Gastrocnemius medialis (tissue), 4 donors: ENCODE measurements at regions of chr20 and their contacts with region 1.

Region 1: DNA sequence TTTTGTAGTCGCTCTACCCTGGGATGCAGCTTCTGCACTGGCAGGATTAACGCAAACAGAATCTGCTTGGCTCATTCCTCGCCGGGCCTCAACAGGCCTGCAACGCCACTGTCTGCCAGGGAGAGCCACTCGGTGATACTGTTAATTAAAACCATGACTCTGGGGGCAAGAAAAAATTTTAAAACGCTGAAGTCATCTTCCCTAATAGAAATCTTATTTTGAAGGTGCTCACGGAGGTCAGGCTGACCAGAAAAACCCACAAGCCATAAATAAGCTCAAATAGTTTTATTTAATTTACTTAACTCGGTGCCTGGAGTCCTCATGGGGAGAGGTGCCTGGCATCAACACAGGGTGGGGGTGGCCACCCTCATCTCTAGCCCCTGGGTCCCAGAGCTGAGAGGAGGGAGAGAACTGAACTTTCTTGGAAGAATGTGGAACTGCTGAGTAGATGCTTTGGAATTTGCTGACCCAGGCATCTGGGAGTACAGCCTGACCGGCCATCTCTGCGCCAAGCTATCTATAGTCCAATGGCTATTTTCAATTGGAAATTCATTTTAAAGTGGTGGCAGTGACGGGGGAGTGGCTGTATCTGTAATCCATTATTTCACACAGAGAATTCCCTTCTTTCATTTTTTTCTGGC is 104.7 kb downstream of the CDH26 start:
- DNase-seq: peak in 1 of 2 donors; percentile 43
- ATAC-seq: peak; percentile 28 to 29
- H3K4me3 ChIP-seq: peak overlapping the region in 1 of 4 donors; percentile 11
- H3K27ac ChIP-seq: peak overlapping the region; percentile 58 to 93 (median 78)
- H3K4me1 ChIP-seq: peaks cover 52 to 58% of the 10 kb centered on the region in 2 donors
- H3K27me3 ChIP-seq: no peaks in the 10 kb centered on the region
- CTCF ChIP-seq: no peak
- POLR2A ChIP-seq: no peak

Region 2: DNA sequence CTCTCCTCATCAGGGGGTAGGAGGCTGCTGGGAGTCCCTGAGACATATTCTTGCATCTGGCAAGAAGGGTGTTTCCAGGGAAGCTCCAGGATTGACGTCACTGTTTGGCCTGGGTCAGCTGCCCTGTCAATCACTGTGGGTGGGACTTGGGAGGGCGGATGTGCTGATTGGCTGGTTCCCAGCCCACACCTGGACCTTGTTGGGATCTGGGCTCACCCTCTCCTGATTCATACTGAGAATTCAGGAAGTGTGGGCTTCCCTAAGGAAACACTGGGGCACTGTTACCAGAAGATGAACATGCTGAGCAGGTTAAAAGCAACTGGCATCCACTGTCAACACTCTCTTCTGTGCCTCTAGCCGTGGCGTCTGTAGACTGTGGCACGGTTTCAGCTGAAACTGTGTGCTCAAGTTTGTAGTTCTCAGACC is 68.2 kb before region 1 on chr20:
- in situ Hi-C with region 1: no loop called
- intact Hi-C with region 1: no loop called
- DNase-seq: no peak
- ATAC-seq: no peak
- H3K4me3 ChIP-seq: no peak overlapping the region
- H3K27ac ChIP-seq: no peak overlapping the region
- H3K4me1 ChIP-seq: peaks cover 0 to 3% of the 10 kb centered on the region in 2 donors
- H3K27me3 ChIP-seq: no peaks in the 10 kb centered on the region
- CTCF ChIP-seq: no peak
- POLR2A ChIP-seq: no peak

Region 3: DNA sequence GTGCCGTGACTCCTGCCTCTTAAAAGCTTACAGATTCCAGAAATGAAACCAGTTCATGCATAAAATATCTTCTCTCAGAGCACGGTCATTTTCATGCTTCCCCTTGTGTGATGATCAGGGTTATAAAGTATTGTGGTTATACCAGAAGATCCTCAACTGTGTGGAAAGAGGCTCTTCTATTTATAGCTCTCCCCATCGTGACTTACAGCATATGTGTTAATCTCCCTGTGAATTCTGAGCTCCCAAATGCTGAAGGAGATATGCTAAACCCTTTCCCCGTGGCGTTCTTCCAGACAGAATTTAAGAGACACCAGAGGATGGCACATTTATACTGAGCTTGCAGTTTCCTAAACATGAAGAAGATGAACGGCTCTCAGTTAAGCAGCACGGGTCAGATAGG is 54.1 kb after region 1 on chr20:
- in situ Hi-C with region 1: loop called in 1 of 4 experiments (anchors 10 kb)
- intact Hi-C with region 1: loop called (anchors 5 kb)
- DNase-seq: peak in 1 of 2 donors; percentile 36
- ATAC-seq: peak; percentile 93 to 97
- H3K4me3 ChIP-seq: no peak overlapping the region
- H3K27ac ChIP-seq: peak overlapping the region; percentile 36 to 60 (median 58)
- H3K4me1 ChIP-seq: peaks cover 13 to 26% of the 10 kb centered on the region in 2 donors
- H3K27me3 ChIP-seq: no peaks in the 10 kb centered on the region
- CTCF ChIP-seq: no peak
- POLR2A ChIP-seq: no peak